Sigmoid colon (tissue), 7 donors: ENCODE measurements at regions of chr1 and their contacts with region 1.

Region 1: DNA sequence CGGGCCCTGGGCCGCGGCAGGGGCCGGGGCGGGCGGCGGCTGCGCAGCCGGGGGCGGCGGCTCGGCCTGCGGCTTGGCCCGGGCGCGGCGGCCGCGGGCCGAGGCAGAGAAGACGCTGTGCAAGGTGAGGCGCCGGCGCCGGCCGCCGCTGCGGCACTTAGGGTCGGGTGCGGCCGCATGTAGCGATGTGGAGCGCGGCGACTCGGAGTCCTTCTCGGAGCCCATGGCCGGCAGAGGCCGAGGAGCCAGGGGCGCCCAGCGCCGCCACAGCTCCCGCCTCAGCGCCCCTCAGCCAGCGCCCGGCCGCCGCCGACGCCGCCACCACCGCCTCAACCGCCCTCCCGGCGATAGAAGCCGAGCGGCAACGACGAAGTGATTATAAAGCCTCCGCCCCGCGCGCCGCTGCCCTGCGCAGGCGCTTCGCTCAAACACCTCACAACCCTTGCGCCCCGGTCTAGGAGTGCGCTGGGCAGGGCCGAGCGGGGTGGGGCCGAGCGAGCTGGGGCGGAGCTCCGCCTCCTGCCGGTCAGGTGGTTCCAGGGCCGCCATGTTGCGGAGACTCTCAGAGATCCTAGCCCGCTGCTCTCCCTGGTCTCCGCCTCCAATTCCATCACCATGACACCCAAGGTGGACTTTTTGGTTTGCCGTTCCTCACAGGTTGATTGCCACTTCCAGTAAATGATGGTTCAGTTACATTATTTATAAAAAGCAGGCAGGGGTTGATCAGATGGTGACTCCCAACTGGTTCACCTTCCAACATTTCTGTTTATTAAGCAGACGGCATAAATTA is at the start of gene RNF19B:
- DNase-seq: peak; percentile 98
- H3K4me3 ChIP-seq: peak within 1 kb of the TSS; percentile 73 to 92 (median 90)
- H3K27ac ChIP-seq: peak within 1 kb of the TSS; percentile 95 to 99 (median 96)
- H3K4me1 ChIP-seq: peaks cover 0 to 37% (median 33%) of the 10 kb centered on the region in 4 donors
- H3K27me3 ChIP-seq: no peaks in the 10 kb centered on the region
- CTCF ChIP-seq: peak in 2 of 4 experiments; percentile 15 to 32
- EP300 ChIP-seq: peak in 1 of 4 donors; percentile 25
- POLR2A ChIP-seq: peak; percentile 80 to 91
- total RNA-seq, gene RNF19B: 14.5 to 28.9 (median 21.6) TPM

Region 2: GRCh38 chr1:32900951-32901822 is 63.5 kb before region 1 on chr1 and contains the start of gene TMEM54:
- intact Hi-C with region 1: loop called (anchors 5 kb)
- DNase-seq: peak; percentile 82
- H3K4me3 ChIP-seq: peak within 1 kb of the TSS; percentile 61 to 81 (median 72)
- H3K27ac ChIP-seq: peak within 1 kb of the TSS; percentile 28 to 76 (median 54)
- H3K4me1 ChIP-seq: peaks cover 0 to 15% (median 14%) of the 10 kb centered on the region in 4 donors
- H3K27me3 ChIP-seq: peaks cover 0 to 5% (median 0%) of the 10 kb centered on the region in 3 donors
- CTCF ChIP-seq: no peak
- EP300 ChIP-seq: no peak
- POLR2A ChIP-seq: no peak
- total RNA-seq, gene TMEM54: 47.4 to 135 (median 57.9) TPM

Region 3: DNA sequence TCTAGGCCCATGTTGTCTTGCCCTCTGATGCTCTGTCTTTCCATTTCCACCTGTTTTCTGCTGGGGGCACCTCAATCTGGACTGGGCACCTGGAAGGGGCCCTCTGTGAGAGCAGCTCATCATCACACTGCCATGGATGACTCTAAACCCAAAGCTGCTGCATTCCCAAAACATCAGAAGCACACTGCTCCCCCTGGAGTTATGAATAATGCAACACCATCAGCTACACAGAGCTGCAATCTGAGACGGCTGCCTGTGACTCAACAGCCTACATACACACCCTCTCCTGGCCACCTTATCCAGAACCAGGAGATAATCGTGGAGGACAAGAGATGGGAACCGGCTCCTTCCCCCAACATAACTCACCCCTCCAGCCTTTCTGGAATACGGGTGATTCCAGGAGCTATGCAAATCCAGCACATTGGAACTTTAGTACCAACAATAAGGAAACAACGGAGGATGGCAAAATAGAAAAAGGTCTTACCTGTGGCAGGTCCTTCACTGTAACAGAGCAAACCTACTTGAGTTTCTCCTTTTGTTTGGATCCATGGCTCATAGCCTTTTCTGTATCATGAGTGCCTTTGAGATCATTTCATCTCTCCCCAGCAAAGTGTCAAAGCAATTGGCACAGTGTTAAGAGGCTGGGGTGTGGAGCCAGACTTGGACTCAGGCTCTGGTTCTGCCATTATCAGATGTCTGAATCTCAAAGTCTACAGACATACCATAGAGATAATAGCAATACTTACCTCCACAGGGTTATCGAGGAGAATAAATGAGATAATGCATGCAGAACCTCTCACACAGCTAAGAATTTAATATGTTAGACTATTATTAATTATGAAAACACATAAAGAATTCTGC is 42.8 kb after region 1 on chr1:
- intact Hi-C with region 1: loop called (anchors 5 kb)
- DNase-seq: no peak
- H3K4me3 ChIP-seq: no peak overlapping the region
- H3K27ac ChIP-seq: no peak overlapping the region
- H3K4me1 ChIP-seq: peaks cover 0 to 42% (median 26%) of the 10 kb centered on the region in 4 donors
- H3K27me3 ChIP-seq: no peaks in the 10 kb centered on the region
- CTCF ChIP-seq: peak in 2 of 4 experiments; percentile 20 to 25
- EP300 ChIP-seq: no peak
- POLR2A ChIP-seq: no peak